Caco-2 (cell line): ENCODE measurements at regions of chr12 and their contacts with region 1.

Region 1: DNA sequence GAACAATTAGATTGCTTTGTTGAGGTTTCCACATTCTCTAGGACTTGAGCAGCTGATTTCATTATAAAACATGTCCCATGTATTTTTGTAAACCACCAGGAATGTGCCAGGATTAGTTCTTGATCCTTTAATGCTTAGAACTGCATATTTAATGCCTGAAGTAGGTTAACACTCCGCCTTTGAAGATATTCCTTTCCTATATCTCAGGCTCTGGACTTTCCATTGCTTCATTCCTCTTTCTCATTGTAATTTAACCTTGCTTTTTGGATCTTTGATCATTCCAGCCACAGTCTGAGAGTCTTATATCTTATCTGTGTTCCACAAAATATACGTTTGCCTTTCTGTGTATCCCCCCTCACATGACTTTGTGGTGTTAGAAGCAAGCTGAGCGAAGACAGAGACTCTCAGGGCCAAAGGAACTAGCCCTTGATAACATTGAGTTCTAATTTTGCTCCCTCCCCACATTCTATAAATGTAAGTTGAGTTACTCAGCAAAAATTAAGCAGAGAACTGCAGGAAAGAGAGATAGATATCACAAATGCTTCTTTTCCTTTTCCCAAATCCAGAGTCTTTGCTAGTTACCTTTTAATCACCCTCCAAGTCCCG is 2.4 kb upstream of the CLEC1B start:
- DNase-seq: no peak
- H3K4me3 ChIP-seq: no peak overlapping the region
- H3K4me3 Mint-ChIP-seq: no peak overlapping the region
- H3K27ac Mint-ChIP-seq: no peak overlapping the region
- H3K4me1 ChIP-seq: peaks cover 3% of the 10 kb centered on the region; the same call in 1 of the 2 replicates
- H3K4me1 Mint-ChIP-seq: no peaks in the 10 kb centered on the region
- H3K27me3 ChIP-seq: no peaks in the 10 kb centered on the region; the same call in 1 of the 2 replicates
- H3K27me3 Mint-ChIP-seq: peaks cover 14% of the 10 kb centered on the region
- CTCF ChIP-seq: no peak

Region 2: DNA sequence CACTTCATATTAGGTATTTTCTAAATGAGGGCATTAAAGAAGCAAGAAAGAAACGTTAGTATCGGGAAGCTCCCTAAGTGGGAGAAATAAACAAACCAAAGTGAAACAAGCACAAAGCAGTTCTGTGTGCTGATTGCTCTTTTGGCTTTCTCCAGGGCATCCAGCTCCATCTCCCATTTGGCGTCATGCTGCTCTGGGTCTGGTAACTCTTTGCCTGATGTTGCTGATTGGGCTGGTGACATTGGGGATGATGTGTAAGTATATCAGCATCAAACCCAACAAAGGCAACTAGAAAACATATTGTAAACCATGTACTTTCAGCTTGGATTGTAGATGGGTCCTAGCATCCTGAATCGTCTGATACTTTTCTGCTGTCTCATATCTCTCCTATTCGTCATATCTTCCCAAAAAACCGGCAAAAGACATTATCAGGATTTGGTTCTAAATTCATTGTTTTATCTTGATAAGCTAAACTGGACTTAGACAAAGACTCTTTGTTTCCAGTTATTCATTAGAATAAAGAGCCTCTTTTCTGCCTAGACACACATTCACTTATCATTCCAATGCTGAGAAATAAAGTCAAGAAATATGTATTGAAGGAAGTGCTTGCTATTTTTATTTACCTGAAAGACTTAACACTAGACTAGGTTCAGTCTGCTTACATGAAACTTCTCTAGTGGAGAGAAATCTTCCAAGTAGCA is 11.5 kb after region 1 on chr12:
- CTCF ChIA-PET with region 1: interaction called, 18 read pairs
- POLR2A ChIA-PET with region 1: no interaction called
- intact Hi-C with region 1: no loop called
- DNase-seq: no peak
- H3K4me3 ChIP-seq: no peak overlapping the region
- H3K4me3 Mint-ChIP-seq: no peak overlapping the region
- H3K27ac Mint-ChIP-seq: no peak overlapping the region
- H3K4me1 ChIP-seq: no peaks in the 10 kb centered on the region
- H3K4me1 Mint-ChIP-seq: no peaks in the 10 kb centered on the region
- H3K27me3 ChIP-seq: no peaks in the 10 kb centered on the region
- H3K27me3 Mint-ChIP-seq: peaks cover 22% of the 10 kb centered on the region
- CTCF ChIP-seq: no peak

Region 3: DNA sequence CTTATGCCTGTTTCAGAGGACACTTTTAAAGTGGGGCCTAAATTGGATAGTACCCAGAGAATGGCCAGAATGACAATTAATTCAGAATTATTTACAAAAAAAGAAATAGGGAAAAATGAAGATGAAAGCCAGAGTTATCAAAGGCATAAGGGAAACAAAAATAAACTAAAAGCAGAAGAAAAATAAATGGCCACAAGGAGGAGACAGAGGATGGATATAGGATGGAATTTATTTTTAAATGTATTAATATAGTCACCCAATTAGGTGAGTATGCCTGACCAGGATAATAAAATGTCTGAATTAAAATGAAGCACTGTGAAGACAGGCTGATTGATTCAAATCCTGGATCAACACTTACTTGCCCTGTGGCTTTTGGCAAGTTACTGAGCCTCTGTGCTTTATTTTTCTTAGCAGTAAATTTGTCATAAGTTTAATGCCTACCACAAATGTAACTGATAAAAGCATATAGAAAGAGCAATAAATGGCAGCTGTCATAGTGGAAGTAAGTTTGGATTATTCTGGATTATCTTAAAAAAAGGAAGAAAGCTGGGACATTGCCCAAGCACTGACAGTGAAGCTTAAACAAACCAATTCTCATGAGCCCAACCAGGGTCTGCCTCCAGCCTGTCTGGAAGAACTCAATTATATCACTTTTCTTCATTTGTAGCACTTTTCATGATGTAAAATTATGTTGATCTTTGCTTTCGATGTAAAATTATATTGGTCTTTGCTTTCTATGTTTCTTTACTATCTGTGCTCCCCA is 32.7 kb after region 1 on chr12:
- CTCF ChIA-PET with region 1: interaction called, 3 read pairs
- POLR2A ChIA-PET with region 1: no interaction called
- intact Hi-C with region 1: loop called (anchors 1 kb)
- DNase-seq: no peak
- H3K4me3 ChIP-seq: no peak overlapping the region
- H3K4me3 Mint-ChIP-seq: no peak overlapping the region
- H3K27ac Mint-ChIP-seq: no peak overlapping the region
- H3K4me1 ChIP-seq: no peaks in the 10 kb centered on the region
- H3K4me1 Mint-ChIP-seq: no peaks in the 10 kb centered on the region
- H3K27me3 ChIP-seq: no peaks in the 10 kb centered on the region
- H3K27me3 Mint-ChIP-seq: peaks cover 6% of the 10 kb centered on the region
- CTCF ChIP-seq: peak; percentile 33 to 69